Calu3 (cell line): ENCODE measurements at regions of chr5 and their contacts with region 1.

Region 1: GRCh38 chr5:164504141-164504772 is 998.8 kb downstream of the MAT2B start:
- DNase-seq: peak; percentile 68
- H3K4me3 Mint-ChIP-seq: peak overlapping the region; percentile 3
- H3K27ac Mint-ChIP-seq: no peak overlapping the region
- H3K4me1 Mint-ChIP-seq: peaks cover 9% of the 10 kb centered on the region
- H3K27me3 Mint-ChIP-seq: no peaks in the 10 kb centered on the region
- CTCF ChIP-seq: peak; percentile 77

Region 2: DNA sequence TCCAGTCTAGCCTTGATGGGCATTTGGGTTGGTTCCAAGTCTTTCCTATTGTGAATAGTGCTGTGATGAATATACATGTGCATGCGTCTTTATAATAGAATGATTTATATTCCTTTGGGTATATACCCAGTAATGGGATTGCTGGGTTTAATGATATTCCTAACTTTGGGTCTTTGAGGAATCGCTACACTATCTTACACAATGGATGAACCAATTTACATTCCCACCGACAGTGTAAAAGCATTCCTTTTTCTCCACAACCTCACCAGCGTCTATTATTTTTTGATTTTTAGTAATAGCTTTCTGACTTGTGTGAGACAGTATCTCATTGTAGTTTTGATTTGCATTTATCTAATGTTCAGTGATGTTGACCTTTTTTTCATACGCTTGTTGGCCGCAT is 41.2 kb after region 1 on chr5:
- CTCF ChIA-PET with region 1: no interaction called
- intact Hi-C with region 1: no loop called
- DNase-seq: no peak
- H3K4me3 Mint-ChIP-seq: no peak overlapping the region
- H3K27ac Mint-ChIP-seq: no peak overlapping the region
- H3K4me1 Mint-ChIP-seq: no peaks in the 10 kb centered on the region
- H3K27me3 Mint-ChIP-seq: no peaks in the 10 kb centered on the region
- CTCF ChIP-seq: no peak

Region 3: DNA sequence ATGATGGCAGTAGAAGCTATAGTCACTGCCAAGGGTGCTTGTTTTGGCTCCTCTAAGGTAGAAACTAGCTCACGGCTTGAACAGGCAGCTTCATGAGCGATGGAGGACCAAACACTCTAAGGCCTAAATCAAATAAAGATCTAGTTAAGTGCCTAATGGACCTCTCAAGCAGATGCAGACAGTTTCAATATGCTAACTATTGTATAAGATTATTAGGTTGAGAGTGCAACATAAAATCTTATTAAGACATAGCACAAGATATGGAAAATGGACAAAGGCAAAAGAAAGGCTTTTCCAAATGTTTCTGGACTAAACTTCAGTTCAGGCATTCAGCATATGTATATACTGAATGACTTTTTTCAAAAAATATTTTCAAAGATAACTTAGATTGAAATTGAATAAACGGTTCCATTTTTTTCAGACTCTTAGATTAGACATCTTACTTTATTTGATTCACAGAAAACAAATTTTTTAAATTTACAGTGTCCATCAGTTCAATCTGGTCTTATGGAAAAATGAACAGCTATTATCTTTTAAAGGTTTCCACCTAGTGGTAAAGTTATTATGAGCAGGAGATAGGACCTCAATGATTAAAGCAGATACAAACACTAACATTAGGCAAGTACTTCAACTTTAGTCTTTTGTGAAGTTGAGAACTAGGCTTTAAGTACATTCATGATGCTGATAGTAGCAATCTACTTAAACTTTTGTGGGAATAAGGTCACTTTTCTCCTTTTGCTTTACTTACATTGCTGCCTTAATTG is 168.9 kb after region 1 on chr5:
- CTCF ChIA-PET with region 1: no interaction called
- intact Hi-C with region 1: loop called (anchors 10 kb)
- DNase-seq: no peak
- H3K4me3 Mint-ChIP-seq: no peak overlapping the region
- H3K27ac Mint-ChIP-seq: no peak overlapping the region
- H3K4me1 Mint-ChIP-seq: no peaks in the 10 kb centered on the region
- H3K27me3 Mint-ChIP-seq: no peaks in the 10 kb centered on the region
- CTCF ChIP-seq: no peak